ENCODE measurements at regions of chr6 and their contacts with region 1.

Region 1: DNA sequence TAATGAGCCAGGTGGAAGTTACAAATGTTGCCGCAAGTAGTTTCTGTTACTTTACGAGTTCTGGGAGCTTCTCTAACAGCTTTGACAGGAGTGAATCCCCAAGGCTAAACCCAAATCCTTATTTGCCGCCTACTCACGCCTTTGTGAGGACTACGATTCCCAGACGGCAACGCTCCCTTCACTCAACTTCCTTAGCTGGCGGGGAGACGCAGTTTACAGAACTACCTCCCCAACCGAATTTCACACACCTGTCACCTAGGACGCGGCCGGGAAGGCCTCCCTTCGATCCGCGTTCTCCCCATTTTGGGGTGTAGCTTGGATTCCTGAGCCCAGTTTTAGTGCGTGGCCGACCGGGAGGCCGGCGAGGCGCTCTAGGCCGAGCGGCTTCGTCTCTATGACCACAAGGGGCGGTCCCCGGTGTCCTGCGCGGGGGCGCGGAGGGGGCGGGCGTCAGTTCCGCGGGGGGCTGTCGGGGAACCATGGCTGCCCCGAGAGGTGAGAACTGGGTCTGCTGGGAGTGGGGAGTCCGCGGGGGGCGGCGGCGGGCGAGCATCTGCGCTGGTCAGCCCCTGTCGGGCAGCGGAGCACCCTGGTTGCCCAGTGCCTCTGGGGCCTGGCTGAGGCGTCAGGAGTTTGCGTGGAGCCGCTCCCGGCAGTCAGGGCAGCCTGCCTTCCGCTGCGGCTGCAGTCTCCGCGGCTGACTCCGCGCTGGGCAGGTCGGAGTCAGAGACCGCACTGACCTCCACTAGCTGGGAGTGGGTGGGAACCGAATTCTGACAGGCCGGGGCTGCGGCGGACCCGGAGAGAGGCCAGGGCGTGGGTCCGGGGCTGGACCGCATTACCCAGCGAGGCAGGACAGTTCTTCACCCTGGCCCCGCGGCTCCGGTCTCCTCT is at the start of gene SLC35A1:
- DNase-seq: peak; percentile 87 to 95 (median 90)
- ATAC-seq: peak; percentile 98 to 100 (median 98)
- H3K4me3 ChIP-seq: peak within 1 kb of the TSS; percentile 69 to 98 (median 86)
- H3K27ac ChIP-seq: peak within 1 kb of the TSS; percentile 78 to 96 (median 94)
- H3K4me1 ChIP-seq: peaks cover 0 to 20% (median 7%) of the 10 kb centered on the region in 12 donors
- H3K27me3 ChIP-seq: no peaks in the 10 kb centered on the region
- CTCF ChIP-seq: peak in 11 of 12 donors; percentile 13 to 45 (median 28)
- POLR2A ChIP-seq: peak in 1 of 2 donors; percentile 68
- total RNA-seq, gene SLC35A1: 6.3 to 12.2 (median 9.3) TPM

Region 2: DNA sequence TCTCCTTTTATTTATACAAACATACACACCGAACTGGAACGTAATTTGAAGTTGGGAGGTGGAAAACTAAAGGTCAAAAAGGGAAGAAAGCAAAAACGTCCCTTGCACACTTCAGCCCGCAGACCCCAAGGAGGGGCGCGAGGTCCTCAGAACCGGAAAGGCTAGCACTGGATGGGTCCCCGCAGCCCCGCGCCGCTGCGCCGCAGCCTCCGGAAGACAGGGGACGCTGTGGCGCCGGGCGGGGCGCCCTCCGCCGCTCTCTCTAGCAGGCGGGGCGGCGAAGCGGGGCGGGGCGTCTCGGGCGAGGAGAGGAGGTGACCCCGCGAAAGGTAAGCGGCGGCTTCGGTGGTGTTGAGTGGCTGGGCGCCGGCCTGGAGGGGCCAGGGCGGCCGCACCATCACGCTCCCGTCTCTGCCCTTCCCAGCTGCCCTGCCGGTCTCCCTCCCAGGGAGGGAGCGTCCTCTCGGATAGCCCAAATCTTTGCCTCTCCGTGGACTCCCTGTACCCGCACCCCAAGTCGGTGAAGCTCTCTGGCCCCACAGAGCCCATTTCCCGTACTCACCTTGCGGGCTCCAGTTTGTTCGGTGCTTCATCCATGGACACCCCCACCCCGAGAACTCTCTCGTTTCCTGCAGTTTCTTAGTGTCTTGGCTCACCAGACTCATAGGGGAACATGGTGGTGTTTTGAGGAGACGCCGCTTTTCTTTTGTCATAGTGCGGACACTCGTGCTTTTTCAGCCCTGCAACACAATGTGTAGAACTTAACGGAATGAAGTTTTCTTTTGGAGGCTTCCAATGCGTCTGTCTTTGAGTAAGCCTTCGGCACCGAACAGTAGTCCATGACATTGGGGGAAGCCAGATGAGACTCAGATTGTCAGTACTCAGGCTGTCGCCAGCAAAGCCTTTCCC is 150.2 kb before region 1 on chr6 and contains the start of gene SMIM8:
- intact Hi-C with region 1: loop called in 3 of 10 experiments (anchors 1 to 10 kb)
- DNase-seq: peak; percentile 84 to 92 (median 90)
- ATAC-seq: peak; percentile 93 to 100 (median 100)
- H3K4me3 ChIP-seq: peak within 1 kb of the TSS; percentile 45 to 99 (median 84)
- H3K27ac ChIP-seq: peak within 1 kb of the TSS in 11 of 12 donors; percentile 60 to 91 (median 80)
- H3K4me1 ChIP-seq: peaks cover 0 to 5% (median 0%) of the 10 kb centered on the region in 12 donors
- H3K27me3 ChIP-seq: no peaks in the 10 kb centered on the region
- CTCF ChIP-seq: peak; percentile 96 to 100 (median 98)
- POLR2A ChIP-seq: peak in 1 of 2 donors; percentile 50
- total RNA-seq, gene SMIM8: 6.0 to 17.5 (median 9.0) TPM

Region 3: GRCh38 chr6:87333591-87334181 is 139.1 kb before region 1 on chr6:
- intact Hi-C with region 1: loop called in 2 of 10 experiments (anchors 5 to 10 kb)
- DNase-seq: peak in 2 of 5 donors; percentile 20 to 27
- ATAC-seq: peak; percentile 50 to 79 (median 68)
- H3K4me3 ChIP-seq: peak overlapping the region in 2 of 12 donors; percentile 2 to 10
- H3K27ac ChIP-seq: peak overlapping the region in 7 of 12 donors; percentile 34 to 80 (median 63)
- H3K4me1 ChIP-seq: peaks cover 0 to 30% (median 18%) of the 10 kb centered on the region in 12 donors
- H3K27me3 ChIP-seq: no peaks in the 10 kb centered on the region
- CTCF ChIP-seq: no peak
- POLR2A ChIP-seq: no peak

Region 4: GRCh38 chr6:87407901-87408720 is 64.7 kb before region 1 on chr6 and contains the start of gene CFAP206:
- intact Hi-C with region 1: loop called in 5 of 10 experiments (anchors 2 to 10 kb)
- DNase-seq: peak; percentile 77 to 90 (median 86)
- ATAC-seq: peak; percentile 88 to 97 (median 96)
- H3K4me3 ChIP-seq: peak within 1 kb of the TSS; percentile 54 to 97 (median 91)
- H3K27ac ChIP-seq: peak within 1 kb of the TSS; percentile 44 to 88 (median 78)
- H3K4me1 ChIP-seq: peaks cover 0 to 11% (median 5%) of the 10 kb centered on the region in 12 donors
- H3K27me3 ChIP-seq: no peaks in the 10 kb centered on the region
- CTCF ChIP-seq: peak in 5 of 12 donors; percentile 15 to 46 (median 19)
- POLR2A ChIP-seq: no peak
- total RNA-seq, gene CFAP206: 0.12 to 0.41 (median 0.23) TPM in 7 of 9 donors, not detected in the others

Region 5: GRCh38 chr6:87414329-87414728 is 58.4 kb before region 1 on chr6:
- intact Hi-C with region 1: loop called in 5 of 10 experiments (anchors 2 to 10 kb)
- DNase-seq: no peak
- ATAC-seq: no peak
- H3K4me3 ChIP-seq: no peak overlapping the region
- H3K27ac ChIP-seq: no peak overlapping the region
- H3K4me1 ChIP-seq: no peaks in the 10 kb centered on the region
- H3K27me3 ChIP-seq: no peaks in the 10 kb centered on the region
- CTCF ChIP-seq: no peak
- POLR2A ChIP-seq: no peak

Region 6: DNA sequence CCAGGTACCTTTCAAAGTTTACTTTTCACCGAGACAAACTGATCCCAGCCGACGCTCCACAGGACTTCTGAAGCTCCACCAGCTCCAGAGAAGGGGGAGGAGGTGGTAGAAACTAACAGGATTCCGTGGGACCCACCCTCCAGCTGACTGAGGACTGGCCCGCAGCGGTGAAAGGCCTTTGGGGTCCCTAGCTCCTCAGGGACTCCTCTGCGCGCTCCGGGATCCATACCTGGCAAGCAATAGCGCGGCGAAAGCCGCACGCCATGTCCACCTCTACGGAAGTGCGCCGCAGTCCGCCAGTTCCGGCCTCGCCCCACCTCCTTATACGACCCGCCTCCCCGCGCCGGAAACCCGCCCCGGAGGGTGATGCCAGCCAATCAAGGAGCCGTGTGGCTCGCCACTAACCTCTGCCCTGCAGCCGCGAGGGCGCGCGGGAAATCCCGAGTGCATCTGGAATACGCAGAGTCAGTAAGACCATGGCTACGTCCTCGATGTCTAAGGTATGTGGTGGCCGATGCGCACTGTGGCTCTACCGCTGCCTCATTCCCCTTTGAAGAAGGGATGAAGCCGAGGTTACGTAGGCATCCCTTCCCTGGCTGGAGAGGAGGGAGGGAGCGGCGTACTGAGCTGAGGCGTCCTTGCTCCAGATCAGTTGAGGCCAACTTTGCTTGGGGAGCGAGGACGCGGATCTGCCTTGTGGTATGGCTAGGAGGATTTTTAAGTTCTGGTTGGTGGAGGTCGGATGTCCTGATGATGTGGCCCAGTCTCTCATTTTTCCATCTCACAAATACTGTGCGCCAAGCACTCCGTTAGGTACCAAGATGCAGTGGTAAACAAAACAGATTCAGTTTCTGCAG is 117.1 kb after region 1 on chr6 and contains the starts of genes ORC3 and RARS2:
- intact Hi-C with region 1: loop called in 3 of 10 experiments (anchors 5 to 10 kb)
- DNase-seq: peak; percentile 95 to 99 (median 97)
- ATAC-seq: peak; percentile 100
- H3K4me3 ChIP-seq: peak within 1 kb of the TSS; percentile 60 to 96 (median 84)
- H3K27ac ChIP-seq: peak within 1 kb of the TSS; percentile 42 to 92 (median 82)
- H3K4me1 ChIP-seq: peaks cover 6 to 50% (median 30%) of the 10 kb centered on the region in 12 donors
- H3K27me3 ChIP-seq: no peaks in the 10 kb centered on the region
- CTCF ChIP-seq: peak in 1 of 12 donors; percentile 13
- POLR2A ChIP-seq: peak; percentile 9 to 89
- total RNA-seq, gene ORC3: 15.2 to 28.6 (median 20.8) TPM
- total RNA-seq, gene RARS2: 13.3 to 24.2 (median 20.3) TPM

Region 7: GRCh38 chr6:87701676-87702588 is 229.2 kb after region 1 on chr6 and contains the start of gene AKIRIN2:
- intact Hi-C with region 1: loop called in 3 of 10 experiments (anchors 2 to 10 kb)
- DNase-seq: peak; percentile 96 to 98 (median 96)
- ATAC-seq: peak; percentile 92 to 96 (median 94)
- H3K4me3 ChIP-seq: peak within 1 kb of the TSS; percentile 56 to 99 (median 86)
- H3K27ac ChIP-seq: peak within 1 kb of the TSS; percentile 82 to 99 (median 96)
- H3K4me1 ChIP-seq: peaks cover 0 to 43% (median 24%) of the 10 kb centered on the region in 12 donors
- H3K27me3 ChIP-seq: no peaks in the 10 kb centered on the region
- CTCF ChIP-seq: peak in 1 of 12 donors; percentile 5
- POLR2A ChIP-seq: peak; percentile 96 to 98
- total RNA-seq, gene AKIRIN2: 15.2 to 54.7 (median 40.7) TPM